Psoas muscle (tissue), 8 donors: ENCODE measurements at regions of chr20 and their contacts with region 1.

Region 1: GRCh38 chr20:33401184-33401920 is at the start of gene CDK5RAP1:
- DNase-seq: peak; percentile 85 to 91
- ATAC-seq: peak; percentile 95 to 96 (median 95)
- H3K4me3 ChIP-seq: peak within 1 kb of the TSS; percentile 96
- H3K27ac ChIP-seq: peak within 1 kb of the TSS; percentile 83
- H3K4me1 ChIP-seq: peaks cover 12% of the 10 kb centered on the region
- H3K27me3 ChIP-seq: no peaks in the 10 kb centered on the region
- CTCF ChIP-seq: no peak
- total RNA-seq, gene CDK5RAP1: 14.7 to 28.4 (median 22.8) TPM

Region 2: GRCh38 chr20:33666293-33667244 is 265.2 kb after region 1 on chr20 and contains the start of gene ACTL10:
- intact Hi-C with region 1: loop called in 1 of 2 experiments (anchors 5 kb)
- DNase-seq: peak; percentile 97 to 98
- ATAC-seq: peak; percentile 61 to 70 (median 66)
- H3K4me3 ChIP-seq: peak within 1 kb of the TSS; percentile 73
- H3K27ac ChIP-seq: peak within 1 kb of the TSS; percentile 75
- H3K4me1 ChIP-seq: peaks cover 36% of the 10 kb centered on the region
- H3K27me3 ChIP-seq: no peaks in the 10 kb centered on the region
- CTCF ChIP-seq: peak; percentile 33
- total RNA-seq, gene ACTL10: 0.27 to 0.42 (median 0.37) TPM in 3 of 4 donors, not detected in the other

Region 3: GRCh38 chr20:34473262-34473883 is 1072.0 kb after region 1 on chr20:
- intact Hi-C with region 1: no loop called
- DNase-seq: peak; percentile 37 to 59
- ATAC-seq: peak; percentile 52 to 63 (median 56)
- H3K4me3 ChIP-seq: no peak overlapping the region
- H3K27ac ChIP-seq: no peak overlapping the region
- H3K4me1 ChIP-seq: peaks cover 26% of the 10 kb centered on the region
- H3K27me3 ChIP-seq: no peaks in the 10 kb centered on the region
- CTCF ChIP-seq: peak; percentile 16